Common myeloid progenitor, CD34-positive (primary cell): ENCODE measurements at regions of chr4 and their contacts with region 1.

Region 1: GRCh38 chr4:123488916-123489315 is 92.3 kb downstream of the SPRY1 start:
- DNase-seq: peak; percentile 51 to 93 (median 86)
- H3K4me3 ChIP-seq: no peak overlapping the region
- H3K27ac ChIP-seq: no peak overlapping the region
- H3K4me1 ChIP-seq: peaks cover 0 to 11% (median 3%) of the 10 kb centered on the region in 4 experiments
- H3K27me3 ChIP-seq: no peaks in the 10 kb centered on the region

Region 2: GRCh38 chr4:123477711-123478209 is 11.2 kb before region 1 on chr4:
- CTCF ChIA-PET with region 1: interaction called, 14 read pairs
- POLR2A ChIA-PET with region 1: no interaction called
- DNase-seq: peak; percentile 91 to 97 (median 96)
- H3K4me3 ChIP-seq: peak overlapping the region in 1 of 7 experiments; percentile 21
- H3K27ac ChIP-seq: no peak overlapping the region
- H3K4me1 ChIP-seq: peaks cover 6 to 31% (median 24%) of the 10 kb centered on the region in 4 experiments
- H3K27me3 ChIP-seq: no peaks in the 10 kb centered on the region